Activated CD4-positive, alpha-beta T cell treated with anti-CD3 and anti-CD28 coated beads for 36 hours (primary cell): ENCODE measurements at regions of chr17 and their contacts with region 1.

Region 1: DNA sequence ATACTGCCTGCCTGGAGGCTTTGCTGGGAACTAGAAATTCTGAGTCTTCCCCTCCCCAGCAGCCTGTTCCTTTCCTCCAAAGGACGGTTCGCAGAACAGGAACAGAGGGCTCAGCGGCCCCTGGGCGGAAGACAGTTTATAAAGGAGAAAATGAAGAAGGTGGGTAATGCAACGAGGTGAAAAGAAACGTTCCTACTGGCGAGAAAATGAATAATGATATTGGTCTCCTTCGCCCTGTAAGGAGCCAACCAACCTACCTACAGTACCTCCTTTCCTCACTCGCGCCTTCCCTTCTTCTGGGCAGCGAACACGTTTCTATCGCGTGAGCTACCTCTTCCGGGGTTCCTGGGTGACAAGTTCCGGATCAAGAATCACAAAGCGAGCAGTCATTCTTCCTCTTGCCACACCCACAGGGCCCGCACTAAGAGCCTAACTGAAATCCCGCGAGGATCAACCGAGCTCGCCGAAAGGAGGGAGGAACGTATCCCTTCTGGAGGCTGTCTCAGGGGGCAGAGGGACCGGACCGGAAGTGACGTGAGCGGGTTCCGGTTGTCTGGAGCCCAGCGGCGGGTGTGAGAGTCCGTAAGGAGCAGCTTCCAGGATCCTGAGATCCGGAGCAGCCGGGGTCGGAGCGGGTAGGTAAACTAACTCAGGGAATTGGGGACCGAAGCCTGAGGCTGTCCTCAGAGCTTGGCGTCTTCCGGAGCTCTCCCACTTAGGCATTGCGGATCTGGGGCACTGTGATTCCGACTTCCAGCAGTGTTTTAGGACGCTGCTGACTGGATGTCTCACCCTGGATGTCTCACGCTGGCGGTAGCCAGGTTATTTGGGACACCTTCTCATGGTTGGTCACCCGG is at the starts of genes PTRH2 and VMP1:
- DNase-seq: peak; percentile 97
- ATAC-seq: peak; percentile 99
- H3K4me3 Mint-ChIP-seq: peak within 1 kb of the TSS; percentile 92
- H3K27ac Mint-ChIP-seq: peak within 1 kb of the TSS; percentile 96
- H3K4me1 Mint-ChIP-seq: peaks cover 60% of the 10 kb centered on the region
- H3K27me3 Mint-ChIP-seq: no peaks in the 10 kb centered on the region
- total RNA-seq, gene PTRH2: 41.7 to 54.7 TPM
- total RNA-seq, gene VMP1: 378 to 402 TPM

Region 2: GRCh38 chr17:58415371-58416055 is 1291.8 kb before region 1 on chr17:
- CTCF ChIA-PET with region 1: no interaction called
- POLR2A ChIA-PET with region 1: no interaction called
- intact Hi-C with region 1: no loop called
- DNase-seq: peak; percentile 6
- ATAC-seq: no peak
- H3K4me3 Mint-ChIP-seq: no peak overlapping the region
- H3K27ac Mint-ChIP-seq: no peak overlapping the region
- H3K4me1 Mint-ChIP-seq: peaks cover 40% of the 10 kb centered on the region
- H3K27me3 Mint-ChIP-seq: no peaks in the 10 kb centered on the region

Region 3: DNA sequence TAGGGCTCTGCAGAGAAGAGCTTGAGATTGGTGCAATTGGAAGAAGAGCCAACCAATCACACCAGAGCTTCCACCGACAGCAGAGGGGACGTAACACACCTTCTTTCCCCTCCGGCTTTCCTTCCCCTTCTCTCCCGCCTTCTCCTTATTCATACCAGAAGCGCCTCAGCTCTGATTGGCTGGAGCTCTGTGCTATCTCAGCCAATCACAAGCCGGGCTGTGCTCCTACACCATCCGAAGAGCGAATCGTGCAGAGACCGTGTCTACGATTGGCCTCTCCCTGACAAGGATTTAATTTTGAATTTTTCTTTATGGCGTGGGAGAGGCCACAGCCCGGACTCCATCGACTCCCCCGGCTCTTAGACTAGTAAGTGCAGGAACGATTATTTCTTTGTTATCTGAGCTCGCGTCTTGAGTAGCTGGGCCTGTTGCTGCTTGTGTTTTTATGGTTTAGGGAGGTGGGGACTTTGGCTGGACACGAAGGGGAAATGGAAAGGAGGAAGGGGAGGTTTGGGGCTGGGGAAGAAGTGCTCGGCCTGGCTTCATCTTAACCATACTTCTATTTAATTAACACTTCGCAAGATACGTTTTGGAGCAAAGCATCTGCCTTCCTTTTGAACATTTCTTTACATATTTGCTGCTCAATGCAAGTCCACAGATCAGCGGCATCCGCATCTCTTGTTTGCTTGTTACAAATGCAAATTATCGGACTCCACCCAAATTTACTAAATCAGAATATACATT is 551.7 kb before region 1 on chr17 and contains the start of gene PRR11:
- CTCF ChIA-PET with region 1: no interaction called
- POLR2A ChIA-PET with region 1: no interaction called
- intact Hi-C with region 1: loop called in 1 of 2 experiments (anchors 2 kb)
- DNase-seq: peak; percentile 96
- ATAC-seq: peak; percentile 89
- H3K4me3 Mint-ChIP-seq: no peak within 1 kb of the TSS
- H3K27ac Mint-ChIP-seq: no peak within 1 kb of the TSS
- H3K4me1 Mint-ChIP-seq: peaks cover 37% of the 10 kb centered on the region
- H3K27me3 Mint-ChIP-seq: no peaks in the 10 kb centered on the region
- total RNA-seq, gene PRR11: 73.6 to 95.9 TPM

Region 4: GRCh38 chr17:59498530-59499307 is 208.6 kb before region 1 on chr17:
- CTCF ChIA-PET with region 1: no interaction called
- POLR2A ChIA-PET with region 1: no interaction called
- intact Hi-C with region 1: no loop called
- DNase-seq: no peak
- ATAC-seq: no peak
- H3K4me3 Mint-ChIP-seq: no peak overlapping the region
- H3K27ac Mint-ChIP-seq: no peak overlapping the region
- H3K4me1 Mint-ChIP-seq: no peaks in the 10 kb centered on the region
- H3K27me3 Mint-ChIP-seq: peaks cover 4% of the 10 kb centered on the region

Region 5: GRCh38 chr17:59762513-59763374 is 55.4 kb after region 1 on chr17:
- CTCF ChIA-PET with region 1: interaction called, 3 read pairs
- POLR2A ChIA-PET with region 1: interaction called, 14 read pairs
- intact Hi-C with region 1: no loop called
- DNase-seq: no peak
- ATAC-seq: peak; percentile 66
- H3K4me3 Mint-ChIP-seq: peak overlapping the region; percentile 63
- H3K27ac Mint-ChIP-seq: peak overlapping the region; percentile 98
- H3K4me1 Mint-ChIP-seq: peaks cover 68% of the 10 kb centered on the region
- H3K27me3 Mint-ChIP-seq: no peaks in the 10 kb centered on the region

Region 6: DNA sequence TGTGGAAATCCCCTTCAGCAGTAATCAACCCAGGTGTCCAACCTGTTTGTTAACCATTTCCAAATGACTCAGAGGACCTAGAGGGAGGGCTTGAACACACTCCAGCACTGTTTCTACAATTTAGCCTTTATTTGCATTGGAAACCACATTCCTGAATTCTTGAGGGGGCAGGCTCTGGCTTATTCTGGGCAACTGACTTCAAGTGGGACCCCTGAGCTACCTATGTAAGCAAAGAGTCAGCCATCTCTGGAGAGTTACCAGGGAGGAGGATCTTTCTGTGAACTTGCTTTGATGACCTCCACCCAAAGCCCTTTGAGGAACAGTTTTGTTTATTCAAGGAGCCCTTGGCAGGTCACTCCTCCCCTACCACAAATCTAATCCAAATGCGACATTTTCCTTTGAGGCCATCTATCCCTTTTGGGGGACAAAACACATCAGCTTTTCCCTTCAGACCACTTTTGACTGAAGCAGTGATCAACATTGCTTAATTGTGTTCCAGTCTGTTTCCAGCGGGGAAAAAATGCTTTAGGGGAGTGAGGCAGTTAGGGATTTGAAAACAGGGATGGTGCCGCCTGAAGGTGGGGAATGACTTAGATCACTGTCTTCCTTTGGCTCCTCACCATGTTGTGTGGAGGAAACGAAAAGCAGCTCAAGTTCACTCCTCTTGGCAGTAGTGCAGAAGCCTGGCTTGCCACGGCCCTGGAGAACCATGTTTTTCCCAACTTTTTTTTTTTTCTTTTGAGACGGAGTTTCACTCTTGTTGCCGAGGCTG is 139.2 kb after region 1 on chr17:
- CTCF ChIA-PET with region 1: interaction called, 3 read pairs
- POLR2A ChIA-PET with region 1: interaction called, 3 read pairs
- intact Hi-C with region 1: loop called in 1 of 2 experiments (anchors 5 kb)
- DNase-seq: no peak
- ATAC-seq: peak; percentile 21
- H3K4me3 Mint-ChIP-seq: peak overlapping the region; percentile 46
- H3K27ac Mint-ChIP-seq: peak overlapping the region; percentile 87
- H3K4me1 Mint-ChIP-seq: peaks cover 73% of the 10 kb centered on the region
- H3K27me3 Mint-ChIP-seq: no peaks in the 10 kb centered on the region

Region 7: DNA sequence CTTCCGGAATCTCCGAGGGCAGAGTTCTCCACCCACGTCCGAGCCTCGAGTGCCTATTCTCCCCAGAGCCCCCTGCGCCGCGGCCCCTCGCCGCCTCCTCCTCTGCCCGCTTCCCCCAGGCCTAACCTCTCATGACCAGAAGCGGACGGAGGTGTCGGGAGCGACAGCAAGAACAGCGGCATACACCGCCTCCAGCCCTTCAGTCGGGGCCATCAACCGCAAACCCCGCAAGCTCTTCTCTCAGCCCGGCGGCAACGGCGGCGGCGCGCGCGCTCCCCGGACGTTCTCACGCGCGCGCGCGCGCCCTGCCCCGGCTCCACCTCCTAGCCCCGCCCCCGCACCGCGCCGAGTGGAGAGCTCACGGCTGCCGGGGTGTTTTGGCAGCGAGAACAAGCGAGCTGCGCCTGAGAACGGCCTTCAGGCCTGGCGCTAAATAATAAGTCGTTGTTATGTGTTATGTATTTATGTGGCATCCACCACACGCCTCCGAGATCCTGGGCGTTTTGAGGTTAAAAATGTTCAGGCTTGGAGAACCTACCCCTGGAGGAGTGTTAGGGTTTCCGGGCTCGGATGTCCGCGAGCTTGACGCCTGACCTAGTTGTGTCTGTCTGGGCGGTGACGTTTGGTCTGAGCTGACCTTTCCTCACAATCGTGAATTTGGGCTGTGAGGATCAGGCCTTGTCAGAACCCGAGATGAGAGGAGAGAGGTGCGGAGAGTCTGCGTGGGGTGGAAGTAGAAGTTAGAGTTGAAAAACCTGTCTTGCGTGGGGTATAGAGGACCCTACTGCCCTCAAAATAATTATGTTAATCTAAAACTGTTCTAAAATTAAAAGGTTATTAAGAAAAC is 257.4 kb after region 1 on chr17 and contains the start of gene RNFT1:
- CTCF ChIA-PET with region 1: interaction called, 3 read pairs
- POLR2A ChIA-PET with region 1: no interaction called
- intact Hi-C with region 1: loop called in 1 of 2 experiments (anchors 1 kb)
- DNase-seq: peak; percentile 97
- ATAC-seq: peak; percentile 84
- H3K4me3 Mint-ChIP-seq: peak within 1 kb of the TSS; percentile 78
- H3K27ac Mint-ChIP-seq: peak within 1 kb of the TSS; percentile 96
- H3K4me1 Mint-ChIP-seq: peaks cover 19% of the 10 kb centered on the region
- H3K27me3 Mint-ChIP-seq: no peaks in the 10 kb centered on the region
- total RNA-seq, gene RNFT1: 32.8 to 36.9 TPM

Region 8: GRCh38 chr17:60392042-60392844 is 684.9 kb after region 1 on chr17 and contains the start of gene USP32:
- CTCF ChIA-PET with region 1: no interaction called
- POLR2A ChIA-PET with region 1: no interaction called
- intact Hi-C with region 1: loop called in 1 of 2 experiments (anchors 1 kb)
- DNase-seq: peak; percentile 99
- ATAC-seq: peak; percentile 93
- H3K4me3 Mint-ChIP-seq: peak within 1 kb of the TSS; percentile 77
- H3K27ac Mint-ChIP-seq: peak within 1 kb of the TSS; percentile 99
- H3K4me1 Mint-ChIP-seq: peaks cover 41% of the 10 kb centered on the region
- H3K27me3 Mint-ChIP-seq: no peaks in the 10 kb centered on the region
- total RNA-seq, gene USP32: 32.3 to 33.1 TPM